ENCODE measurements at regions of chr10 and their contacts with region 1.

Region 1: DNA sequence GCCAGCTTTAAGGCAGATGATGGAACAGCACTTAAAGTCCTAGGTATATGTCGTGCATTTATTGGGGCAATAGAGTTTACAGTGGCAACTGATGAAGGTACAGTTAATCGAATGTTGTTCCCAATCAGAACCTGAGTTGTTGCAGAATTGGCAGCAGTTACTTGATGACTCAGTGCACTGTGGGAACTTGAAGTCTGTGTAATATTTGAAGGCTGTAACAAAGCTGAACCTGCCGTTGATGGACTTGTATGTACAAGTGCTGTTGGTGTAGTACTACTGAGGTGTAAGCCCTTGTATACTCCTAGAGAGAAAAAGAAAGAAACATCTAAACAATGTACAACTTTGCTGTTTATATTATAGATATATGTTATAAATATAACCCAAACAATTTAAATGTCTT is 75.3 kb downstream of the EPC1 start:
- DNase-seq: no peak
- ATAC-seq: no peak
- H3K4me3 ChIP-seq: no peak overlapping the region
- H3K4me3 Mint-ChIP-seq: no peak overlapping the region
- H3K27ac ChIP-seq: no peak overlapping the region
- H3K27ac Mint-ChIP-seq: no peak overlapping the region
- H3K4me1 ChIP-seq: no peaks in the 10 kb centered on the region
- H3K4me1 Mint-ChIP-seq: peaks cover 5% of the 10 kb centered on the region
- H3K27me3 ChIP-seq: no peaks in the 10 kb centered on the region
- H3K27me3 Mint-ChIP-seq: no peaks in the 10 kb centered on the region
- CTCF ChIP-seq: no peak

Region 2: GRCh38 chr10:31912898-31913852 is 358.4 kb before region 1 on chr10:
- CTCF ChIA-PET with region 1: no interaction called
- POLR2A ChIA-PET with region 1: no interaction called
- intact Hi-C with region 1: no loop called
- DNase-seq: no peak
- ATAC-seq: no peak
- H3K4me3 ChIP-seq: no peak overlapping the region
- H3K4me3 Mint-ChIP-seq: no peak overlapping the region
- H3K27ac ChIP-seq: no peak overlapping the region
- H3K27ac Mint-ChIP-seq: no peak overlapping the region
- H3K4me1 ChIP-seq: peaks cover 26% of the 10 kb centered on the region
- H3K4me1 Mint-ChIP-seq: peaks cover 72% of the 10 kb centered on the region
- H3K27me3 ChIP-seq: no peaks in the 10 kb centered on the region
- H3K27me3 Mint-ChIP-seq: no peaks in the 10 kb centered on the region
- CTCF ChIP-seq: no peak

Region 3: DNA sequence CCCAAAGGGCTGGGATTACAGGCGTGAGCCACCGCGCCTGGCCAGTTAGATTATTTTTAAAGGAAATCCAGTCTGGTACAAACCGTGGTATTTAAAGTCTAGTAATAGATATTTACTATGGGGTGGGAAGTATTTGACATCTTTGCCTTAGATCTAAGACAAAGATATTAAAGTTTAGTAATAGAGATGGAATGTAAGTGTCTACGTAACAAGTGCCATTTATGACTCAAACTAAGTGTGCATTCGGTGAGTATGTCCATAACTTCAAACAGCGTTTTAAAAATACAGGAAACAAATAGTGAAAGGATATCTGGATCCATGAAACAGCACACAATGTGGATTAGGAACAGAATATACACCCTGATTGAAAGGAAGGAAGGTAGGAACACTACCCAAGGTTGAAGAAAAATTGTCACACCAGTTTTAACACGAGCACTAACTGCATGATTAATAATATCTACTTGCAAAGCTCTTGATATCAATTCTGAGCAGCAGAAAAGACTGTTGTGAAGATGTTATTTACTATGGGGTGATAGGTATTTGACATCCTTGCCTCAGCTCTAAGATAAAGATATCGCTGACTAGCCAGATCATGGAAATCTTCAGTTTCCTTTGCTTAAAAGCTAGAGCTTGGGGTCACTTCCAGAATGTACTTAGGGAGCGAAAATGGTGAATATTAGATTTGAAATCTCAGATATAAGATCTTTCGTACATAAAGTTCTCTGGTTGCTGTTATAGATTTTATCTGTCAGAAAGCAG is 26.6 kb after region 1 on chr10:
- CTCF ChIA-PET with region 1: no interaction called
- POLR2A ChIA-PET with region 1: no interaction called
- intact Hi-C with region 1: loop called in 1 of 2 experiments (anchors 2 kb)
- DNase-seq: no peak
- ATAC-seq: no peak
- H3K4me3 ChIP-seq: no peak overlapping the region
- H3K4me3 Mint-ChIP-seq: peak overlapping the region; percentile 43
- H3K27ac ChIP-seq: no peak overlapping the region
- H3K27ac Mint-ChIP-seq: peak overlapping the region; percentile 70
- H3K4me1 ChIP-seq: peaks cover 41% of the 10 kb centered on the region
- H3K4me1 Mint-ChIP-seq: peaks cover 73% of the 10 kb centered on the region
- H3K27me3 ChIP-seq: no peaks in the 10 kb centered on the region
- H3K27me3 Mint-ChIP-seq: no peaks in the 10 kb centered on the region
- CTCF ChIP-seq: no peak

Region 4: GRCh38 chr10:32308027-32308603 is 36.5 kb after region 1 on chr10:
- CTCF ChIA-PET with region 1: no interaction called
- POLR2A ChIA-PET with region 1: no interaction called
- intact Hi-C with region 1: loop called in 1 of 2 experiments (anchors 5 kb)
- DNase-seq: peak in 2 of 9 experiments; percentile 28 to 35
- ATAC-seq: peak; percentile 46
- H3K4me3 ChIP-seq: no peak overlapping the region
- H3K4me3 Mint-ChIP-seq: peak overlapping the region; percentile 2
- H3K27ac ChIP-seq: peak overlapping the region in 1 of 2 experiments; percentile 15
- H3K27ac Mint-ChIP-seq: peak overlapping the region; percentile 64
- H3K4me1 ChIP-seq: peaks cover 35% of the 10 kb centered on the region
- H3K4me1 Mint-ChIP-seq: peaks cover 73% of the 10 kb centered on the region
- H3K27me3 ChIP-seq: no peaks in the 10 kb centered on the region
- H3K27me3 Mint-ChIP-seq: no peaks in the 10 kb centered on the region
- CTCF ChIP-seq: no peak

Measured in CD8-positive, alpha-beta T cell (primary cell).